HAP-1 (cell line): ENCODE measurements at regions of chr11 and their contacts with region 1.

Region 1: DNA sequence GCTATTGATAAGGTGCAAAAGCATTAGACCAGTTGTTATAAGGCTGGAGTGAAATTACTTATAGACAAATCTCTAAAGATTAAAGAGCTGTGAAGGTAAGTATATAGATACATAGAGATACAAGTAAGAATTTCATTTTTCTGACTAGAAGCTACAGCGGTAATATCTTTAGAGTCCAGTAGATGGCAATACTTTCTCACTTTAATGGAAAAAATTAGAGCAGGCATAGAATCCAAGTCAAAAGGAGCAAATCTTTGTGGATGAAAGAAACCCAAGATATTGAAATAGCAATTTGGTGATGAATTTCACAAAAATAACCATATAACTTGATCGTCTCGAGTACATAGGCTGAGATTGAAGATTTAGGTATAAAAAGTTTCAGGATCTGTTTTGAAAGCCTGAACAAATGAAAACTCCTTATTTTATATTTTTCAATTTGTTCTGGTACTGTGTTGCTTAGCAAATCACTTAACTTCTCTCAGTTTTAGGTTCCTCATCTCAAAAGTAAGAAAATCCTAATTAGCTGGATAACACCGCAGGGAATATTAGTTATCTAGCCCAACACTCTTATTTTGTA is 81.9 kb downstream of the UVRAG start:
- DNase-seq: peak in 1 of 2 experiments; percentile 73
- H3K4me3 ChIP-seq: no peak overlapping the region
- H3K4me1 ChIP-seq: peaks cover 20% of the 10 kb centered on the region
- H3K27me3 ChIP-seq: peaks cover 8% of the 10 kb centered on the region

Region 2: GRCh38 chr11:75814369-75814685 is 82.6 kb before region 1 on chr11:
- in situ Hi-C with region 1: no loop called
- DNase-seq: no peak
- H3K4me3 ChIP-seq: peak overlapping the region; percentile 80
- H3K4me1 ChIP-seq: peaks cover 8% of the 10 kb centered on the region; the same call in 1 of the 2 replicates
- H3K27me3 ChIP-seq: no peaks in the 10 kb centered on the region

Region 3: DNA sequence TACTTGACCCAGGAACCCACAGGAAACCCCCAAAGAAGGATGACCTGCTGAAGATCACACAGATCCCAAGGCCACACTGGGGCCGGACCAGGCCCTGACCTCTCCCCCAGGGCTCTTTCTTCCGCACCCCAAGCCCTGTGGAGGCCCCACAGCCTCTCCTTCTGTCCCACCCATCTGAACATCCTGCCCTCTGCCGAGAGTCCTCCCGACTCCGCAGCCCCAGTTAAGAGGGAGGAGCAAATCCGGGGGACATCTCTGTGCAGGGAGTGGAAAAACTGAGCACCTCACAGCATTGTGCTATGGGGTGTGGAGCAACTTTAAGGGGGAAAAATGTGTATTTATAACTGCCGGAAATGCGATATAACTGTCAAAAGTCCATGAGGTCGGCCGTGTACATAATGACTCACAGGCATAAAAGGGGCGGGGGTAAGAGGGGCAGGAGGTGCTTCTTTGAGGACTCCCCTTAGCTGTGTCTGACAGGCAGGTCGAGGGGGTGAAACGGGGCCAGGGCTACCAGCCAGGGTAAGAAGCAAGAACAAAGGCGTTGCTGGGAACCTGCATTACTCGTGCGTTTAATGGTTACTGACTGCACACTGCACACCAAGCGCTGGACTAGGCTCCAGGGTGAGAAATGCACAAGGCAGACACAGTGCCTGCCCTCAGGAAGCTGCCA is 252.1 kb after region 1 on chr11:
- in situ Hi-C with region 1: loop called (anchors 5 kb)
- DNase-seq: no peak
- H3K4me3 ChIP-seq: no peak overlapping the region
- H3K4me1 ChIP-seq: peaks cover 8% of the 10 kb centered on the region; the same call in 1 of the 2 replicates
- H3K27me3 ChIP-seq: no peaks in the 10 kb centered on the region

Region 4: DNA sequence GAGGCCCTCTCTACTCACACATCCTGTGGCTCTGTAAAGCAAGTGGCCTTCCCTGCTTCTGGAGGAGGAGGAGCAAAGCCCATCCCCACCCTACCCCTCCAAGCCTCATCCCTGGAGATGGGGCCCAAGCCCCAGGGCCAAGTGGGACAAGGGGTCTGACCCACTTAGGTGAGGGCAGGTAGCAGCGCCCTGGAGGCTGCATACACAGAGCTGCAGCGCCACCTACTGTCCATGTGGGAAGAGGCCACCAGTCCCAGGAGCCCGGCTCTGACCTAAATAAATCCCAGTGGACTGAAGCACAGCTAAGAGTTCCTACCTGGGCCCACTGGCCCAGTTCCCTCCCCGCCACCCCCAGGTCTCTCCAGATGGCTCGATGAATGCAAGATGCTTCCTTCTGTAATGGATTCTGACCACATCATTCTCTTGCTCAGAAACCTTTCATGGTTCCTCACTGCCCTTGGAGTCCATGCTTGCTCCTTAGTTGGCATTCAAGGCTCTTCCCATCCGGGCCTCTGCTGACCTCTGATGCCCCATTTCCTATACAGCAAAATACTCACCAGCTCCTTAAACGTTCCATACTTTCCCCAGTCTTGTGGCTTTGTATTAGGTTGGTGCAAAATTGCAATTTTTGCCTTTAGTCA is 421.9 kb after region 1 on chr11:
- in situ Hi-C with region 1: loop called (anchors 5 kb)
- DNase-seq: peak; percentile 71 to 91
- H3K4me3 ChIP-seq: no peak overlapping the region
- H3K4me1 ChIP-seq: no peaks in the 10 kb centered on the region
- H3K27me3 ChIP-seq: no peaks in the 10 kb centered on the region

Region 5: GRCh38 chr11:76680518-76681425 is 783.8 kb after region 1 on chr11:
- in situ Hi-C with region 1: loop called (anchors 25 kb)
- DNase-seq: peak; percentile 63 to 92
- H3K4me3 ChIP-seq: no peak overlapping the region
- H3K4me1 ChIP-seq: no peaks in the 10 kb centered on the region
- H3K27me3 ChIP-seq: no peaks in the 10 kb centered on the region; the same call in 1 of the 2 replicates